Activated naive CD8-positive, alpha-beta T cell treated with anti-CD3 and anti-CD28 coated beads, Interleukin-2, amount 10 ng/mL, durations not matched to agents 7 days and 5 days (primary cell): ENCODE measurements at regions of chr6 and their contacts with region 1.

Region 1: DNA sequence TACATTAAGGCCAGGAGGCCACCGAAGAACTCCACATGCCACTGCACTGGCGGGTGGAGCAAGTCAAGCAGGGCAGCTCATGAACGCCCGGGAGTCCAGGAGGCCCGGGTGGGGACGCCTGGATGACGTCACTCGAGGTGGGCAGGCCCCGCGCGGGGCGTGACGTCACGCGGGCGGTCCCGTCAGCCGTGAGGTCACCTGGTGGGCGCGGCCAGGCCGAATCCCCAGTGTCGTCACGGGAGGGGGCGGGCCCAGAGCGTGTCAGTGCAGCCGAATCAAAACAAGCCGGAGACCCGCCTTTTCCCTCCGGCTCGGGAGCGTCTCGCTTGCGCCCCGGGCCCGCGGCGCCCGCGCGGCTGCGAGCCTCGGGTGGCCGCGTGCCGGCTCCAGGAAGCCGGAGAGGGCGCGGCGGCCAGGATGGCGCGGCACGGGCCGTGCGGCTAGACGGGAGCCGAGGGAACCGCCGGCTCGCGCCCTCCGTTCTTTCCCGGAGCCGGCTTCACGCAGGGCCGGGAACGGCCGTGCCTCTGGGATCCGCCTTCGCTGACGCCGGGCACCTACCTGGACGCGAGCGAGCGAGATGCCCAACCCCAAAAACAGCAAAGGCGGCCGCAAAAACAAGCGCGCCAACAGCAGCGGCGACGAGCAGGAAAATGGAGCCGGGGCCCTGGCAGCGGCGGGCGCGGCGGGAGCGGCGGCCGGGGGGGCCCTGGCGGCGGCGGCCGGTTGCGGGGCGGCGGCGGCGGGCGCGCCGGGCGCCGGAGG is at the start of gene HECA:
- DNase-seq: peak; percentile 100
- ATAC-seq: peak; percentile 72
- H3K4me3 Mint-ChIP-seq: peak within 1 kb of the TSS; percentile 82
- H3K27ac Mint-ChIP-seq: peak within 1 kb of the TSS; percentile 89
- H3K4me1 Mint-ChIP-seq: peaks cover 53% of the 10 kb centered on the region
- H3K27me3 Mint-ChIP-seq: no peaks in the 10 kb centered on the region
- total RNA-seq, gene HECA: 73.3 to 78.2 TPM

Region 2: DNA sequence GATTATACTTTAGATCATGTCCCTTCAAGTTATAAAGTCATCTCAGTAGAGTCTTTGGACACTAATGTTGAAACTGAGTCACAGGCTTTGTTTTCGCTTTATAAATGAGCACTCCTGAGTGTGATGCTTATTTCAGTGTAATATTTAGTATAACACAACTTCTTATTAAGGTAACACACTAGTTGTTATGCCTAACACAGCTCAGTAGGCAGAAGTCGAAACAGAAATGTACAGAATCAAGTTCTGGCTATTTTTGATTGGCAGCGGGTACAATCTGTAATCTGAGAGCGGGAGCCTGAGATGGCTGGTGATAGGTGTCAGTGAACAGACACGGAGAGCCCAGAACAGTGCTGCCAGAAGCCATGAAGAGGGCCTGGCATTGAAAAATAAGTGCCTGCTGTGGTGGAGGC is 11.3 kb after region 1 on chr6:
- POLR2A ChIA-PET with region 1: interaction called, 23 read pairs
- DNase-seq: no peak
- ATAC-seq: peak; percentile 9
- H3K4me3 Mint-ChIP-seq: peak overlapping the region; percentile 56
- H3K27ac Mint-ChIP-seq: peak overlapping the region; percentile 77
- H3K4me1 Mint-ChIP-seq: peaks cover 70% of the 10 kb centered on the region
- H3K27me3 Mint-ChIP-seq: no peaks in the 10 kb centered on the region

Region 3: DNA sequence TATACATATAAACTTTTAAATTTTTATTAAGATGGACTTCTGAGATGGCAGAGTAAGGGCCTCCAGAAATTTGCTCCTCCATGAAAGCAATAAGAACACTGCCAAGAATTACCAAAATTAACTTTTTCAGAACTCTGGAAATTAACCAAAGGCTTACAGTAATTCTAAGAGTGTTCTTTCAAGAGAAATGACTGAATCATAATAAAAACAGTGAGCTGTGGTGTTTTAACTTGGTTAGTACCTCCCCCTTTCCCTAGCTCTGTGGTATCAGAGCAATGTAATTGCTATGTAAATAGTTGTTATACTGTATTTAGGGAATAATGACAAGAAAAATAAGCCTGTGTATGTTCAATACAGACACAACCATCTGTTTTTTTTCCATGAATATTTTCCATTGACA is 18.9 kb after region 1 on chr6:
- POLR2A ChIA-PET with region 1: interaction called, 23 read pairs
- DNase-seq: no peak
- ATAC-seq: no peak
- H3K4me3 Mint-ChIP-seq: no peak overlapping the region
- H3K27ac Mint-ChIP-seq: no peak overlapping the region
- H3K4me1 Mint-ChIP-seq: peaks cover 59% of the 10 kb centered on the region
- H3K27me3 Mint-ChIP-seq: no peaks in the 10 kb centered on the region

Region 4: DNA sequence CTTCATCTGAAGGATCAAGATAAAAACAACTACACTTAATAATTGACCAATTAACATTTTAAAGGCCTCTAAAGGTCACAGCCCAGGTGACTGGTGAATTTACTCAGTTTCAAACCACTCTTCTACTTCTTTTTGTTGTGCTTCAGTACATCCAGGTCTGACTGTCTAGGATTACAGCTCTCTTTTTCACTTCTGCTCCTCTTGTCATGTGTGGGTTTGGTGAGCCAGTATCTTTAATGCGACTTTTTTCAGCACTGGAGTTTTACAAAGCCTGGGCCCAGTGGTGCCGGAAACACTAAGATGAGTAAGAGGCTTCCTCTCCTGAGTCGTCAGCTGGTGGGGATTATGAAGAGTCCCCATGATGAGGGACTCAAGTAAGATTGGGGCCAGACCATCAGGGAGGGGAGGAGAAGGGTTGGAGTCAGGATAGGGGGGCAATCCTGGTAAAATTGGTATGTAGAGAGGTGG is 26.9 kb after region 1 on chr6:
- POLR2A ChIA-PET with region 1: interaction called, 11 read pairs
- DNase-seq: no peak
- ATAC-seq: peak; percentile 71
- H3K4me3 Mint-ChIP-seq: peak overlapping the region; percentile 71
- H3K27ac Mint-ChIP-seq: peak overlapping the region; percentile 93
- H3K4me1 Mint-ChIP-seq: peaks cover 62% of the 10 kb centered on the region
- H3K27me3 Mint-ChIP-seq: no peaks in the 10 kb centered on the region